ENCODE measurements at regions of chr17 and their contacts with region 1.

Region 1: DNA sequence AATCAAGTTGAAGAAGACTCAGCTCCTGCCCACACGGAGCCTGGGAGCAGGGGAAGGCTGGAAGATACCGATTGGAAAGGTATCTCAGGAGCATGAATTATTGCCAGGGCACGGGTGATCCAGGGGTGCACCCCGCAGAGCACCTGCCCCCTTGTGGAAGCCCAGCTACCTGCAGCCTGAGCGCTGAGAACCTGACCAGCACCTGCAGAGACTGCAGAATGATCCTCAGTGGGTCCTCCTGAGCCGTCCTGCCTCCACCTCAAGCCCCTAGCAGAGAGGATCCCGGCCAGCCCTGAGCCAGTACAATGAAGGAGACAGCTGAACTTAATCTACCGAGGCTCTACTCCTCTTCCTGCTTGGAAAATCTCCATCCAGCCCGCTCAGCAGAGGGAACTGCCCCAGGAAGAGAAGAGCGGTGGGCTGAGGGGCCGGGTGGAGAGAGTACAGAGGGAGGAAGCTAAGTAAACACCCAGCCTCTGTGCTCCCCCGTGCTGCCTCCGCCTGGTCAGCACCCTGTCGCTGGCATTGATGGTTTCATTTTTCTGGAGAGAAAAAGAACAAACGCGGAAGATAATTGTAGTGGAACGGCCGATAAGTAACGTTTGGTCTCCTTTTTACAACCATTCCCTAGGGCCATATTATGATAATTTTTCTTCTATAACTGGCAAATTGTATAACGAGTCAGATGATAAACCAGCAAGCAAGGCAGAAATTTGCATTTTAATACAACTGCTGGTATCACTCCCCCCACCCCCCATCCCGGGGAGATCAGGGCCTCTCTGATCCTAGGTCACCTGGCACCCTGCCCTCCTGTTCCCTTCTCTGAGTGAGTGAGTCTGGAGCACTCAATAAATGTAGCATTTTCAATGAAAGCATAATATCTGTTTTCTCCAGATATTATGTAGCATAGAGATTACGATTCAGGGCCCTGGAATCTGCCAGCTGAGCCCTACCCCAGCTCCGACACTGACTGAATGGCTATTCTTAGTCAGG is 204.5 kb upstream of the RPL38 start:
- DNase-seq: peak; percentile 35
- ATAC-seq: peak; percentile 99
- H3K4me3 ChIP-seq: no peak overlapping the region
- H3K27ac ChIP-seq: no peak overlapping the region
- H3K4me1 ChIP-seq: no peaks in the 10 kb centered on the region
- H3K27me3 ChIP-seq: peaks cover 12% of the 10 kb centered on the region; the same call in 1 of the 2 replicates
- CTCF ChIP-seq: peak; percentile 49 to 99 (median 93)
- POLR2A ChIP-seq: no peak
- RAD21 ChIP-seq: peak; percentile 70

Region 2: GRCh38 chr17:73595479-73595878 is 403.5 kb before region 1 on chr17:
- CTCF ChIA-PET with region 1: no interaction called
- POLR2A ChIA-PET with region 1: no interaction called
- RAD21 ChIA-PET with region 1: no interaction called
- intact Hi-C with region 1: loop called (anchors 10 kb)
- DNase-seq: no peak
- ATAC-seq: peak; percentile 88
- H3K4me3 ChIP-seq: no peak overlapping the region
- H3K27ac ChIP-seq: no peak overlapping the region
- H3K4me1 ChIP-seq: no peaks in the 10 kb centered on the region
- H3K27me3 ChIP-seq: no peaks in the 10 kb centered on the region
- CTCF ChIP-seq: peak; percentile 53 to 75 (median 74); a peak in 5 of 6 replicates
- POLR2A ChIP-seq: no peak
- RAD21 ChIP-seq: peak; percentile 74

Region 3: GRCh38 chr17:73650140-73650539 is 348.8 kb before region 1 on chr17:
- CTCF ChIA-PET with region 1: interaction called, 3 read pairs
- POLR2A ChIA-PET with region 1: no interaction called
- RAD21 ChIA-PET with region 1: no interaction called
- intact Hi-C with region 1: loop called (anchors 2 kb)
- DNase-seq: no peak
- ATAC-seq: peak; percentile 90
- H3K4me3 ChIP-seq: no peak overlapping the region
- H3K27ac ChIP-seq: no peak overlapping the region
- H3K4me1 ChIP-seq: no peaks in the 10 kb centered on the region
- H3K27me3 ChIP-seq: peaks cover 24% of the 10 kb centered on the region
- CTCF ChIP-seq: peak; percentile 36 to 55 (median 53); a peak in 4 of 6 replicates
- POLR2A ChIP-seq: no peak
- RAD21 ChIP-seq: peak; percentile 64

Region 4: GRCh38 chr17:73986641-73987177 is 12.2 kb before region 1 on chr17:
- CTCF ChIA-PET with region 1: interaction called, 10 read pairs
- POLR2A ChIA-PET with region 1: no interaction called
- RAD21 ChIA-PET with region 1: no interaction called
- intact Hi-C with region 1: no loop called
- DNase-seq: no peak
- ATAC-seq: peak; percentile 43; the same call in 1 of the 2 replicates
- H3K4me3 ChIP-seq: no peak overlapping the region
- H3K27ac ChIP-seq: no peak overlapping the region
- H3K4me1 ChIP-seq: no peaks in the 10 kb centered on the region
- H3K27me3 ChIP-seq: peaks cover 16% of the 10 kb centered on the region
- CTCF ChIP-seq: no peak
- POLR2A ChIP-seq: no peak
- RAD21 ChIP-seq: no peak

Region 5: GRCh38 chr17:74176546-74177001 is 177.6 kb after region 1 on chr17:
- CTCF ChIA-PET with region 1: no interaction called
- POLR2A ChIA-PET with region 1: no interaction called
- RAD21 ChIA-PET with region 1: no interaction called
- intact Hi-C with region 1: loop called (anchors 1 kb)
- DNase-seq: peak; percentile 56
- ATAC-seq: peak; percentile 97
- H3K4me3 ChIP-seq: no peak overlapping the region
- H3K27ac ChIP-seq: no peak overlapping the region
- H3K4me1 ChIP-seq: no peaks in the 10 kb centered on the region
- H3K27me3 ChIP-seq: peaks cover 38% of the 10 kb centered on the region; the same call in 1 of the 2 replicates
- CTCF ChIP-seq: peak; percentile 89 to 99 (median 97)
- POLR2A ChIP-seq: no peak
- RAD21 ChIP-seq: peak; percentile 98

Measured in HCT116 (cell line).